ENCODE measurements at regions of chr15 and their contacts with region 1.

Region 1: GRCh38 chr15:66287461-66288057 is 5.8 kb upstream of the DIS3L start:
- DNase-seq: peak; percentile 68
- H3K4me3 ChIP-seq: no peak overlapping the region
- H3K27ac ChIP-seq: no peak overlapping the region
- H3K4me1 ChIP-seq: peaks cover 25% of the 10 kb centered on the region
- H3K27me3 ChIP-seq: no peaks in the 10 kb centered on the region
- CTCF ChIP-seq: peak; percentile 72

Region 2: DNA sequence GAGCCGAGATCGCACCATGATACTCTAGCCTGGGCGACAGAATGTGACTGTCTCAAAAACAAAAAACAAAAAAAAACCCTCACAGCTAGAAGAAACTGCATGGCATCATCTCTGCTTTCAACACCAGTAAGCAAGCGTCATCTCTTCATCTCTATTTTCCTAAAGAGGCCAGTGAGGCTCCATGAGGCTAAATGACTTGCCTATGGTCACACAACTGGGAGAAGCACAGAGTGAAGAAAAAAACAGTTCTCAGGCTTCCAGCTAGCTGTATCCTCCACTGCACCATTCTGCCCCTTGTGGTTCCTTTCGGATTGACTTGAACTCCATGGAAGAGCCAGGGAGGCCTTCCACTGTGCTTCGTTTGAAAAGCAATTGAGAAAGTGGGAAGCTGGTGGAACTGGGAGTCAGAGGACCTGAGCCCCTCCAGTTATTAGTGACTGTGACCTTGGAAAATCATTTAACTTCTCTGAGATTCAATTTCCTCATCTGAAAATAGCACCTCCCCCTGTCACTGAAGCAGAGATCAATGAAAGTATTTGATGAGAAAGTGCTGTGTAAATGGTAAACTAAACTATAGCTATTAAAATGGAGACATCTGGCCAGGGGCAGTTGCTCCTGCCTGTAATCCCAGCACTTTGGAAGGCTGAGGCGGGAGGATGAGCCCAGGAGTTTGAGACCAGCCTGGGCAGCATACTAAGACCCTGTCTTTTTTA is 463.4 kb before region 1 on chr15:
- CTCF ChIA-PET with region 1: interaction called, 10 read pairs
- POLR2A ChIA-PET with region 1: no interaction called
- intact Hi-C with region 1: no loop called
- DNase-seq: peak; percentile 67
- H3K4me3 ChIP-seq: no peak overlapping the region
- H3K27ac ChIP-seq: no peak overlapping the region
- H3K4me1 ChIP-seq: no peaks in the 10 kb centered on the region
- H3K27me3 ChIP-seq: no peaks in the 10 kb centered on the region
- CTCF ChIP-seq: peak; percentile 71

Region 3: DNA sequence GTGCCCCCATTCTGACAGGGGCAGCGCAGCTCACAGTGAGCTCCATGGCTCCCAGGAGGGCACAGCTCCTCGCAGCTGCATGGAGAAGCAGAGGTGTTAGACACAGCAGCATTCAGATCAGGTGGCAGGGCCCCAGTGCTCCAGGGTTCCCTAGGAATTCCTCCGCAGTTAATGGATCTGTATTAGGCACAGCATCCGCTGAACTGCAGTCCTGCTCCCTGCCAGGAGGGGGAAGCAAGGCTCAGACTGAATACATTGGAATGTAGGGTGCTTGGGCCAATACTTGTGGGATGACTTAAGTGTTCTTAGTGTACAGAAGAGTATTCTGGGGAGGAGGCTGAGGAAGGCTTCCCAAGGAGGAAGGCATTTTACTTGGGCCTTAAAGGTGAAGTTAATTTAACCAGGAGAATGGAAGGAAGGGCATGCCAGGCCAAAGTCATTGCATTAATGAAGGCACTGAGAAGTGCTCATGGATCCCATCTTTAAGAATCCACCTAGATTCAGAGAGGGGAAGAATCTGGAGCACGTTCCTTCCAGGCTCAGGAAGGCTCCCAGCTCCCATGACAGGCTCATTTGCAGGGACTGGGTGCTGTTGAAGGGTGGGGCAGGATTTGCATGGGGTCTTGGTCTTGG is 306.6 kb before region 1 on chr15:
- CTCF ChIA-PET with region 1: no interaction called
- POLR2A ChIA-PET with region 1: no interaction called
- intact Hi-C with region 1: loop called (anchors 5 kb)
- DNase-seq: peak; percentile 77
- H3K4me3 ChIP-seq: no peak overlapping the region
- H3K27ac ChIP-seq: no peak overlapping the region
- H3K4me1 ChIP-seq: no peaks in the 10 kb centered on the region
- H3K27me3 ChIP-seq: peaks cover 35% of the 10 kb centered on the region
- CTCF ChIP-seq: peak; percentile 83

Region 4: DNA sequence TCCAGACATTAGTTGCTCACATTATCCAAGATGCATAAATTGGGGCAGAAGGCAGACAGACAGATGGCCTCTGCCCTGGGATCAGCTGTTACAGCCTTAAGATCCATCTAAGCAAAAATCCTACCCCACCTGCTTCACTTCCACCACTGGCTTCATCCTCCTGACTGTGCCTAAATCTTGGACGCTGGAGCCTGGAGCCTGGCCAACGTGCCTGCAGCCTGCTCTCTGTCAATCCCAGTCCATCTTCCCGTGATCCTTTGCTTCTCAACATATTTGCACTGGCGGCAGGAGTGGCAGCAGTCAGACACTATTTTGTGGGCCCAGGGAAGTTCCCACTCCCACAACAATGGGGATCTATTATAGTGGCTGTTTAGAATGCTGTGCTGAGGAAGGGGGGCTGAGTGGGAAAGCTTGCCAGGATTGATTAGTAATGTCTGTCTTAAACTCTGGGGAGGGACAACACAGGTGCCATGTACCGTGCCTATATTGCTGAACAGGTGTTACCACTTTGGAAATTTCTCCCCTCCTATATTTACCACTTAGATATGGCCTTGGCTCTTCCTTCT is 155.2 kb before region 1 on chr15:
- CTCF ChIA-PET with region 1: interaction called, 6 read pairs
- POLR2A ChIA-PET with region 1: no interaction called
- intact Hi-C with region 1: loop called (anchors 5 kb)
- DNase-seq: no peak
- H3K4me3 ChIP-seq: no peak overlapping the region
- H3K27ac ChIP-seq: no peak overlapping the region
- H3K4me1 ChIP-seq: peaks cover 29% of the 10 kb centered on the region
- H3K27me3 ChIP-seq: peaks cover 5% of the 10 kb centered on the region
- CTCF ChIP-seq: no peak

Measured in A673 (cell line).